ENCODE measurements at regions of chr7 and their contacts with region 1.

Region 1: DNA sequence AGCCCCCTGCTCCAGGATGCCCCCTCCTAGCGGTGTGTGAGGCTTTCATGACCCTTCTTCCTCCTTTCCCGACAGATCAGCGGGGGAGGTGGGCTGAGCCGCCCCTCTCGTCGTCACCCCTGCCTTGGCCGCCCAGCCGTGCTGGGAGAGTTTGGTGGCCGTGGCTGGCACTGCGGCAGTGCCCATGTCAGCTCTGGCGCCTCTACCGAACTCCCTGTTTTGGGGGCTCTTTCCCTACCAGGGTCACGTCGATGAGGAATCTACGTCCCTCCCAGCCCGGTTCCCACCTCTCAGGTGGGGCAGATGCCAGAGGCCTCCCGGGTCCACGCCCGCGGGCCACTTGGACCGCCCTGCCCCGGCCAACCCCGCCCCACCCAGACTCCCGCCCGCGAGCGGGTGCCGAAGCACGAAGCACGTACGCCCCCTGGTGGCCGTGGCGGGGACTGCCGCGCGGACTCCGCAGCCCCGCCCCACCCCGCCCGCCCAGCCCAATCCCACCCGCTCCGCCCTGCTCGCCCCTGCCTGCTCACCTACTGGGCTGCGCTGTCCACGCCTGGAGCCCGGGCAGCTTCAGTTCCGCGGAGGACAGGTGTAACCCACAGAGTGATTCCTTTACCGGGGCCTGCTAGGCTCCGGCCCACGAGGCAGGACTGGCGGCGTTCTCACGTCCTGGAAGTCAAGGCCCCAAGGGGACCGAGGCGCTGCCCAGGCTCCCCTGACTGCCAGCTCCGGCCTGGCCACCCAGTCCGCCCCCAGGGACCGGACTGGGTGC is 127.1 kb downstream of the UBE2H start:
- DNase-seq: no peak
- H3K4me3 ChIP-seq: peak overlapping the region; percentile 73
- H3K27ac ChIP-seq: peak overlapping the region; percentile 39
- H3K27me3 ChIP-seq: no peaks in the 10 kb centered on the region
- CTCF ChIP-seq: peak; percentile 54

Region 2: DNA sequence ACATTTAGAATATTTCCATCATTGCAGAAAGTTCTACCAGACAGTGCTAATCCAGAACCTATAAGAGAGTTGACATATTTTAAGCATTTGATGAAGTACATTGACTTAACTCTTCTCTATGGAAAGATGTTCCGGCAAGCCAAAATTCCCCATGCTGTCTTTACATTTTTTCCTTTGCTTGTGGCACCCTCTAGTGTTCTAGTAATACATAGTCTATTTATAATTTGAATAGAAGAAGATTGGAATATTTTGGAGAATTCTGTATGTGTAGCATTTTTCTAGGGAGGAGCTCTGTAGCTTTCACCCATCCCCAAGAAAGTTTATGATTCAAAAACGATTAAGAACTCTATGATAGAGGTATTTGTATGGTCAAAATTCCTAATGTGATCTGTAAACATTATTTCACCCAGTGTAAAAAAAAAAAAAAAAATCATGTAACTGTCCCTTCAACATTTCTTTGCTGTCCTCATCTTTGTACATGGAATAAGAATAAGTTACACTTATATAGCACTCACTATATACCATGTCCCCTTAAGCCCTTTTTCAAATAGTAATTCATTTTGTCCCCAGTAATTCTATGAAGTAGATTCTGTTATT is 180.9 kb before region 1 on chr7:
- CTCF ChIA-PET with region 1: interaction called, 11 read pairs
- POLR2A ChIA-PET with region 1: no interaction called
- DNase-seq: peak; percentile 20
- H3K4me3 ChIP-seq: no peak overlapping the region
- H3K27ac ChIP-seq: no peak overlapping the region
- H3K27me3 ChIP-seq: no peaks in the 10 kb centered on the region
- CTCF ChIP-seq: peak; percentile 58

Region 3: DNA sequence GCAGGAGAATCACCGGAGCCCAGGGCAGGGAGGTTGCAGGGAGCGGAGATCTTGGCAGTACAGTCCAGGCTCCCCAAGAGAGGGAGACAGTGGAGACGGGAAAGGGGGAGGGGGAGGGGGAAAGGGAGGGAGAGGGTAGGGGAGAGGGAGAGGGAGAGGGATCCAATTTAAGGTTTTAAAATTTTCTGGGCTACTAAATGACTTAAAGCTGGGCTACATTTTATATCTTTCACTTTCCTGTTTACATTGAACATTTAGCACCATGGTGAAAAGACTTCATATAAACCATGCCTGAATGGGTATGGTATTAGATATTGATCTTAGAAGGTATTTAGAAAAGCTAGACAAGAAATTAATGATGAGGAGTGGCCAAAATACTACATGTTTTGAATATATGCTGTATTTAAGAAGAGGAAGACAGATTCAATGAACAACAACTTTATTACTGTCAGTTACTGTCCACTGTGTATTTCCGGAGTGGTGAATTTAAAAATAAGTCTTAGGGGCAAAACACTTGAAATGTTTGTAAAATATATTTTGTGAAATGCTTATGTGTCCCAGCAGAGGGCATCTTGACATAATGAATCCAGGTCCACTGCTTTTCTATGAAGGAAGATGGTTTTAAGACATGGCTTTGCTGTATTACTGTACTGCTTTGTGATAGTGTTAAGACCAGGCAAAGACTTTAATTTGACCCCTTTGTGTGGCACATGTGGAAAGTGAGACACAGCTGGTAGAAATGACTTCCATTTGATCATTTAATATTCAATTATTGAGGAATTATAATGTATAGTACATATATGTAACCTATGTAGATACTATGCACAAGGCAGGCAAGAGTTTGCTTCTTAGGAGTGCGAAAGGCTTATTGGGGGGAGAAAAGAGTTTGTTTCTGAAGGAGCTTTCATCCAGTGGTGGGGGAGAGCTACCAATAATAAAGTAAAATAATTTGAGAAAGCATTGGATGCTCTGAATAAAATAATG is 161.4 kb before region 1 on chr7:
- CTCF ChIA-PET with region 1: interaction called, 41 read pairs
- POLR2A ChIA-PET with region 1: interaction called, 5 read pairs
- DNase-seq: peak; percentile 57
- H3K4me3 ChIP-seq: no peak overlapping the region
- H3K27ac ChIP-seq: no peak overlapping the region
- H3K27me3 ChIP-seq: no peaks in the 10 kb centered on the region
- CTCF ChIP-seq: peak; percentile 69

Region 4: DNA sequence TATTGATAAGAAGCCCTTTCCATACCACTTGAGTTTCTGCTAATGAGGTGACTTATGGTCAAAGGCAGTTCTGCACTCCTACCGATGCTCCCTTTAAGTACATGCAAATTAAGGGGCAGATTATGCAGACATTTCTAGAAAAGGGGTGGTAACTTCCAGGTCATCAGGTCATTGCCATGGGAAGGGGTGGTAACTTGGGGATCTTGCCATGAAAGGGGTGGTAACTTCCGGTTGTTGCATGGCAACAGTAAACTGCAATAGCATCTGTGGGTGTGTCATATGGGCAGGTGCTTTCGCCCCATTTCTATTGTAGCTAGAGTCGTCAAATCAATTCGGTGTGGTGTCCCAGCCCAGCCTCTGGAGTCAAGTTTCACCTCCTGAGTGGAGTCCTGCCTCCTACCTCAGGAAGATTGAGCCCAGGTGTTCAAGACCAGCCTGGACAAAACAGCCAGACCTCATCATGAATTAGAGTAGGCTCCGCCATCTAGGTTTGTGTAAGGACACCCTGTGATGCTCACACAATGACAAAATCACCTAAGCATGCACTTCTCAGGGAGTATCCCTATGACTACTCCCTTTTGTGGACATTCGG is 23.7 kb before region 1 on chr7:
- CTCF ChIA-PET with region 1: no interaction called
- POLR2A ChIA-PET with region 1: no interaction called
- DNase-seq: no peak
- H3K4me3 ChIP-seq: no peak overlapping the region
- H3K27ac ChIP-seq: no peak overlapping the region
- H3K27me3 ChIP-seq: peaks cover 8% of the 10 kb centered on the region
- CTCF ChIP-seq: no peak

Region 5: DNA sequence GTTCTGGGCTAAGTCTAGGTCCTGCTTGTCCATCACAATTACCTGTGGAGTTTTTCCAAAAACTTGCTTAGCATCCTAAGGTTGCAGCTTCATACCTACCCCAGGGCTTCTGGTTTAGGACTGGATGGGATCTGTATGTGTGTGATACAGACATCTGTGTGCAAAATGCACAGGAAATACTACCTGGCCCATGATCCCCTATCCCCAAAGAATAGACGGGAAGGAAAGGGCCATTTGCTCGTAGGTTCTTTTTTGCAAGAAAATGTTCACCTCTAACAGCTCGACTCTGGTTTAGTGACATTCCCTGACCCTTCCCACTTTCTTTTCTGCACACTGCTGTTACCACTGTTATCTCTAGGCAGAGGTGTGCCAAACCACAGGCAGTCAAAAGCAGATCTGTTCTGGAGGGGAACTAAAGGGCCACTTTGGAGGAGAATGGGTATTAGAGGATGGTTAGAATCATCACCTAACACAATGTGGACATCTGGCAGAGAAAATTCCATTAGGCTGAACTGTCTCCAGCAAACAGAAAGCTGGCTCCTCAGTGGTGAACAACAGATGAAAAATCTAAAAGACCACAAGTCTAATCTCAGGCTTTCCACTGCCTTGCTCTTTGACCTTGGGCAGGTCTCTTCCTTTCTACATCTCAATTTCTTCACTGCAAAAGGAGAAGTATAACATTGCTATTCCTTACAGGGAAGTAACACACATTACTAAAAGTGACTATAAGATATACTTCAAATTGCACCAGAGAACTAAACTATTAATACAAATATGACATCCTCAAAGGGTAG is 19.7 kb after region 1 on chr7:
- CTCF ChIA-PET with region 1: interaction called, 14 read pairs
- POLR2A ChIA-PET with region 1: interaction called, 3 read pairs
- DNase-seq: no peak
- H3K4me3 ChIP-seq: peak overlapping the region; percentile 7; the same call in 1 of the 2 replicates
- H3K27ac ChIP-seq: peak overlapping the region; percentile 88
- H3K27me3 ChIP-seq: no peaks in the 10 kb centered on the region
- CTCF ChIP-seq: no peak

Region 6: DNA sequence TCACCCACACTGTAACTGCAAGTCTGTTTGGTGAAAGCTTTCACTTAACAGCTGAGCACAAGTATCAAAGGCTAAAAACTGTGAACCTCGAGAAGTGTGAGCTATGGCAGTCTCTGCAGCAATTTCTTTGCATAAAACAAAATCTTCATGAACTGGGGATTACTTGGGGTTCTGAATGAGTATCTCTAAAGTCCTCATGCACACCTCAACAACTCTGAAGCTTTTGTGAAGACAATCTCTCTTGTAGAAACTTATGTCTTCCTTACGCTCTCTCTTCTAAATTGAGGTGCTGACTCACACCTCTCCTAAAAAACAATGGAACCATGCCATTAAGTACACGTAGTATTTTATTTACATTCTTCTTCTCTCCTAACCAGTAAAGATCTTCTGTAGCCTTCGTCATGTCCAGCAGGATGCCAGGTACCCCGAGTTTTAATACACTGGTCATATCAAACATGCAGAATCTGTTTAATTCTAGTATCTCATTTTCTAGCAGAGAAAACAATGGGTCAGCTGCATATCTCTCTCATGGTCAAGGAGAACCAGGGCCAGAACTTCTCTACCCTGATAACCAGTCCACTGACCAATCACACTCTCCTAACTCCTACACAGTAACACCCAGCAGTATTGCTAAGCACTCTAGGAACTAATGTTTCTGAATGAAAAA is 50.2 kb after region 1 on chr7:
- CTCF ChIA-PET with region 1: interaction called, 10 read pairs
- POLR2A ChIA-PET with region 1: no interaction called
- DNase-seq: no peak
- H3K4me3 ChIP-seq: no peak overlapping the region
- H3K27ac ChIP-seq: peak overlapping the region; percentile 68
- H3K27me3 ChIP-seq: no peaks in the 10 kb centered on the region
- CTCF ChIP-seq: no peak

Region 7: GRCh38 chr7:129948877-129949291 is 123.2 kb after region 1 on chr7:
- CTCF ChIA-PET with region 1: interaction called, 11 read pairs
- POLR2A ChIA-PET with region 1: interaction called, 11 read pairs
- DNase-seq: peak; percentile 91
- H3K4me3 ChIP-seq: peak overlapping the region; percentile 90
- H3K27ac ChIP-seq: peak overlapping the region; percentile 97
- H3K27me3 ChIP-seq: no peaks in the 10 kb centered on the region
- CTCF ChIP-seq: no peak